Tibial artery (tissue), 4 donors: ENCODE measurements at regions of chr2 and their contacts with region 1.

Region 1: DNA sequence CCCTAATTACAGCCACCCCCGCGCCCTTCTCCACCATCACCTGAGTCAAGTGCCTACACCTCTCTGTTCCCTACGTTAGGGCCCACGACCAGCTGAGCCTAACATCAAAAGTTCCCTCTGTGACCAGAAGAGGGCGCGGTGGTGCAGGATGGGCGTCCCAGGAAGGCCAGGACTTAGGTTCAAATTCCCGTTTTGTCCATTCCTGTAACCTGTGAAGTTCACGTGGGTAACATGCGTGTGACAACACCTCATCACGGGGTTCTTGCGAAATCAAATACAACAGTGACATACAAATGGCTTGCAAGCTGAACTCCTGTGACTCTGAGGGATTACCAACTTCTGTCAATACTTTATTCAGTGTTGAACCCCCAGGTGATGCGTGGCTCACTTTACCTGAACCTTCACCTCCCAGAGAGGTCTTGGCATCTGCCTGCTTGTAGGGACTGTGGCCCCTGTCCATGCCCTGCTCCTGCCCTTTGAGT is 207.9 kb downstream of the ARL4C start:
- DNase-seq: peak; percentile 57 to 80
- H3K4me3 ChIP-seq: no peak overlapping the region
- H3K27ac ChIP-seq: no peak overlapping the region
- H3K4me1 ChIP-seq: no peaks in the 10 kb centered on the region
- H3K27me3 ChIP-seq: no peaks in the 10 kb centered on the region
- CTCF ChIP-seq: peak; percentile 55 to 60

Region 2: DNA sequence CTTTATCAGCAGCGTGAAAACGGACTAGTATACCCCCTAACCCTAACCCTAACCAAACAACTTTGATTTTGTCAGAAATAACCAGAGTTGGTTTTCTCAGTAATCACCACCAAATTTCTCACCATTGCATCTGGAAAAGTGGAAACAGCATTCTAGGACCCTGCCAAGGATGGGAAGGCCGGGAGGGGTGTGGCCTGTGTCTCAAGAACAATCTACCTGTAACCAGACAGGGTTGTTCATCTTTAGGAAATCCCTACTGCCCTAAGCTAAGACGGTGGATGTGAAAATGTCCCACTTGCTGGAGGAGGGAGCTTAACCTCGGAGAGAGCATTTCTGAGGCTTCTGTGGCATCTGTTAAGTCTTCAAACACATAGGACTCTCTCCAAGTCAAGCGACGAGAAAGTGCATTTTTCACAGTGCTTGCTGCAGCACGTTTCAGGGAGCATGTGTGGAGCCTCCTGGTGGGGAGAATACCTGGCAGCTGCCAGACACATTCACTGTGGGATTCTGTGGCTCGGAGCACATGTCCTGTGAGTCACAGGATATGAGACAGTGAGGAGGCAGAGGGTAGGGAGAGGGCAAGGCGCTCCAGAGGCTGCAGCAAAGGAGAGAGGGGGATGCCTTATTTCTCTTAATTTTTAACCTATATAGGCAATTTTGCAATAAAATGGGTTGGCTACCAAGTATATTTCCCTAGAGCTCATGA is 31.0 kb before region 1 on chr2:
- intact Hi-C with region 1: no loop called
- DNase-seq: peak in 1 of 2 donors; percentile 41
- H3K4me3 ChIP-seq: no peak overlapping the region
- H3K27ac ChIP-seq: no peak overlapping the region
- H3K4me1 ChIP-seq: no peaks in the 10 kb centered on the region
- H3K27me3 ChIP-seq: peaks cover 0 to 5% of the 10 kb centered on the region in 2 donors
- CTCF ChIP-seq: peak; percentile 8

Region 3: GRCh38 chr2:234500394-234501006 is 211.5 kb after region 1 on chr2:
- intact Hi-C with region 1: loop called (anchors 5 kb)
- DNase-seq: peak in 1 of 2 donors; percentile 43
- H3K4me3 ChIP-seq: no peak overlapping the region
- H3K27ac ChIP-seq: no peak overlapping the region
- H3K4me1 ChIP-seq: peaks cover 0 to 16% (median 7%) of the 10 kb centered on the region in 4 donors
- H3K27me3 ChIP-seq: peaks cover 0 to 4% of the 10 kb centered on the region in 2 donors
- CTCF ChIP-seq: peak; percentile 26 to 42

Region 4: DNA sequence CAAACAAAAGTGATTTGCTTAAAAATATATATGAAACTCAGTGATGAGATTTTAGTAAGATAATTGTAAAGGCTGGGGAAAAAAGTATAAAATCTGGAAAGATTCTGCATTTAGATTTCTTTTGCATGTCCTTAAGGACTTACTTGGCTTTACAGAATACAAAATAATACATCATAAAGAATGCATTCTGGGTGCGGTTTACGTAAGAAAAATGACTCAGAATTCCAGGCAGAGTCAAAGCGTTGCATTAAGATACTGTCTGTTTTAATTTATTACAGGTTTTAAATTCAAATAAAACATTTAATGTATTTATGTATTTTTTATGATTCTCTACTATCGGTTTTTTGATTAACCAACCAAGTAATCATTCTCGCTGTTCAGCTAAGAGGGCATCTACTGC is 840.8 kb after region 1 on chr2:
- intact Hi-C with region 1: loop called (anchors 10 kb)
- DNase-seq: no peak
- H3K4me3 ChIP-seq: no peak overlapping the region
- H3K27ac ChIP-seq: no peak overlapping the region
- H3K4me1 ChIP-seq: no peaks in the 10 kb centered on the region
- H3K27me3 ChIP-seq: peaks cover 0 to 23% of the 10 kb centered on the region in 2 donors
- CTCF ChIP-seq: no peak

Region 5: GRCh38 chr2:236250909-236251579 is 1962.0 kb after region 1 on chr2:
- intact Hi-C with region 1: no loop called
- DNase-seq: no peak
- H3K4me3 ChIP-seq: no peak overlapping the region
- H3K27ac ChIP-seq: no peak overlapping the region
- H3K4me1 ChIP-seq: no peaks in the 10 kb centered on the region
- H3K27me3 ChIP-seq: peaks cover 0 to 12% of the 10 kb centered on the region in 2 donors
- CTCF ChIP-seq: no peak